SK-N-SH (cell line): ENCODE measurements at regions of chr20 and their contacts with region 1.

Region 1: DNA sequence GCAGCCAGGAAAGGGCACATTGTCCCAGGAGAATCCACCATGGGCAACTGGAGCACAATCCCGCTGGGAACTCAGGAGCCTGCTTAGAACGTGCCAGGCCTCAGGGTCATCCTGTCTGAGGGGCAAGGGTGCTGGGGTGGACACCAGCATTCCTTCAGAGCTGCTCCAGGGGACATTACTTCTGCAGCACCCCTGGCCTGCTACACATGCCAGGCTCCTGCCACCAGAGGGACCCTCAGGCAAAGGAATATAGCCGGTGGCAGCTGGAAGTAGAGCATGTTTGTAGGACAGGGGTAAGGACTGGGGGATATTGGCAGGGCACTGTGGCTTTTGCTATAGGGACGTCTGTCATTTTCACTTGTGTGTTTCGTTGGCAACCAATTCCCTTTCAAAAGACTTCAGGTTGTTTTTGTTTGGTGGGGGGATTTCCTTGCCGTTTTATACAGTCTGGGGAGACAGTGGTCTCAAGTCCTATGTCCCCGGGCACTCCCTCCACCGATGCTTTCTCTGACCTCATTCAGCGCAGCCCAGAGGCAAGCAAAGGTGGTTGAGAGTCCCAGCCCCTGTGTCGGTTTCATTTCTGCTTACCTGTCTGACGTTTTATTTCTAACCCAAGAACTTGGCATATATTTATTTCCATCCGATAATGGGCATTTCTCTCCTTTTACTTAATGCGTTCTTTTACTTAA is 130.8 kb downstream of the JPH2 start:
- DNase-seq: peak; percentile 82
- H3K4me3 ChIP-seq: no peak overlapping the region
- H3K27ac ChIP-seq: no peak overlapping the region
- H3K4me1 ChIP-seq: peaks cover 0 to 5% of the 10 kb centered on the region in 2 experiments; a peak in 1 of 4 replicates
- H3K27me3 ChIP-seq: no peaks in the 10 kb centered on the region
- CTCF ChIP-seq: peak; percentile 54
- EP300 ChIP-seq: no peak
- RAD21 ChIP-seq: peak; percentile 82

Region 2: GRCh38 chr20:44038681-44039123 is 17.5 kb before region 1 on chr20:
- CTCF ChIA-PET with region 1: interaction called, 13 read pairs
- POLR2A ChIA-PET with region 1: no interaction called
- DNase-seq: peak; percentile 72
- H3K4me3 ChIP-seq: no peak overlapping the region
- H3K27ac ChIP-seq: peak overlapping the region in 1 of 2 experiments; percentile 44; a peak in 1 of 4 replicates
- H3K4me1 ChIP-seq: peaks cover 0 to 32% of the 10 kb centered on the region in 2 experiments; a peak in 1 of 4 replicates
- H3K27me3 ChIP-seq: no peaks in the 10 kb centered on the region
- CTCF ChIP-seq: no peak
- EP300 ChIP-seq: no peak
- RAD21 ChIP-seq: peak; percentile 9; the same call in 1 of the 2 replicates

Region 3: GRCh38 chr20:44074252-44075151 is 18.3 kb after region 1 on chr20:
- CTCF ChIA-PET with region 1: interaction called, 67 read pairs
- POLR2A ChIA-PET with region 1: no interaction called
- DNase-seq: peak; percentile 86
- H3K4me3 ChIP-seq: no peak overlapping the region
- H3K27ac ChIP-seq: peak overlapping the region; percentile 35 to 97; a peak in 3 of 4 replicates
- H3K4me1 ChIP-seq: peaks cover 9 to 31% of the 10 kb centered on the region in 2 experiments; a peak in 2 of 4 replicates
- H3K27me3 ChIP-seq: no peaks in the 10 kb centered on the region
- CTCF ChIP-seq: 0 out of 2 replicates have a peak, but pooled peaks have one; percentile 6
- EP300 ChIP-seq: peak in 1 of 2 experiments; percentile 100; a peak in 2 of 4 replicates
- RAD21 ChIP-seq: peak; percentile 74